ENCODE measurements at regions of chr3 and their contacts with region 1.

Region 1: DNA sequence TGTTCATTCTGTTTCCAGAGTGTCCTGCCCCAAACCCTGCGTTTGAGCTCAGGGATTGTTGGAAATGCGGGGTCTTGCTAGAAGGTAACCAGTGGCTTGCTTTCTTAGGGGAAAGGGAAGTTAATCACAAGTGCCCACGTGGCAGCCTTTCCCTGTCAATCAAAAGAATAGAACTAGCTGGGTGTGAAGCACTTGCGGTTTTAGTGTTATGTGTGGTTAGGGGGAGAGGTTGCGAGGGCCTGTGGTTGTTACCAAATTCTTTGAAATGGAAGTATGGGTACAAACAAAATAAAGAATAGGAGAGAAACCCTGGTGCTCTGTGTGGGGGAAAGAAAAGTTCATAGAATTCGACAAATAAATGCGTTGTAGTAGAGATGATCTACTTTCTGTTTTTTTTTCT is 67.6 kb downstream of the FNDC3B start:
- DNase-seq: peak; percentile 68 to 87 (median 79)
- H3K4me3 ChIP-seq: peak overlapping the region in 2 of 3 experiments; percentile 29 to 53
- H3K4me3 Mint-ChIP-seq: peak overlapping the region; percentile 71 to 86
- H3K27ac ChIP-seq: peak overlapping the region; percentile 51 to 76
- H3K27ac Mint-ChIP-seq: peak overlapping the region; percentile 90 to 97 (median 95)
- H3K4me1 ChIP-seq: peaks cover 56 to 67% of the 10 kb centered on the region in 2 donors
- H3K4me1 Mint-ChIP-seq: peaks cover 73% of the 10 kb centered on the region
- H3K27me3 ChIP-seq: no peaks in the 10 kb centered on the region
- H3K27me3 Mint-ChIP-seq: peaks cover 0 to 2% (median 0%) of the 10 kb centered on the region in 3 donors
- CTCF ChIP-seq: no peak

Region 2: GRCh38 chr3:172074586-172074985 is 32.4 kb before region 1 on chr3:
- intact Hi-C with region 1: loop called in 1 of 2 experiments (anchors 5 kb)
- DNase-seq: peak; percentile 85 to 92 (median 87)
- H3K4me3 ChIP-seq: peak overlapping the region in 2 of 3 experiments; percentile 6 to 10
- H3K4me3 Mint-ChIP-seq: peak overlapping the region in 1 of 2 donors; percentile 80
- H3K27ac ChIP-seq: peak overlapping the region; percentile 49 to 83
- H3K27ac Mint-ChIP-seq: peak overlapping the region; percentile 87 to 94 (median 92)
- H3K4me1 ChIP-seq: peaks cover 56 to 60% of the 10 kb centered on the region in 2 donors
- H3K4me1 Mint-ChIP-seq: peaks cover 73% of the 10 kb centered on the region
- H3K27me3 ChIP-seq: no peaks in the 10 kb centered on the region
- H3K27me3 Mint-ChIP-seq: no peaks in the 10 kb centered on the region
- CTCF ChIP-seq: no peak

Region 3: GRCh38 chr3:172228036-172228415 is 121.0 kb after region 1 on chr3:
- intact Hi-C with region 1: no loop called
- DNase-seq: no peak
- H3K4me3 ChIP-seq: no peak overlapping the region
- H3K4me3 Mint-ChIP-seq: no peak overlapping the region
- H3K27ac ChIP-seq: no peak overlapping the region
- H3K27ac Mint-ChIP-seq: peak overlapping the region in 1 of 7 donors; percentile 6
- H3K4me1 ChIP-seq: no peaks in the 10 kb centered on the region
- H3K4me1 Mint-ChIP-seq: peaks cover 7% of the 10 kb centered on the region
- H3K27me3 ChIP-seq: no peaks in the 10 kb centered on the region
- H3K27me3 Mint-ChIP-seq: no peaks in the 10 kb centered on the region
- CTCF ChIP-seq: no peak

Measured in CD14-positive monocyte (primary cell).